ENCODE measurements at regions of chr2 and their contacts with region 1.

Region 1: GRCh38 chr2:28870146-28870891 is at the start of gene TRMT61B:
- DNase-seq: peak; percentile 97
- total RNA-seq, gene TRMT61B: 18.2 TPM

Region 2: DNA sequence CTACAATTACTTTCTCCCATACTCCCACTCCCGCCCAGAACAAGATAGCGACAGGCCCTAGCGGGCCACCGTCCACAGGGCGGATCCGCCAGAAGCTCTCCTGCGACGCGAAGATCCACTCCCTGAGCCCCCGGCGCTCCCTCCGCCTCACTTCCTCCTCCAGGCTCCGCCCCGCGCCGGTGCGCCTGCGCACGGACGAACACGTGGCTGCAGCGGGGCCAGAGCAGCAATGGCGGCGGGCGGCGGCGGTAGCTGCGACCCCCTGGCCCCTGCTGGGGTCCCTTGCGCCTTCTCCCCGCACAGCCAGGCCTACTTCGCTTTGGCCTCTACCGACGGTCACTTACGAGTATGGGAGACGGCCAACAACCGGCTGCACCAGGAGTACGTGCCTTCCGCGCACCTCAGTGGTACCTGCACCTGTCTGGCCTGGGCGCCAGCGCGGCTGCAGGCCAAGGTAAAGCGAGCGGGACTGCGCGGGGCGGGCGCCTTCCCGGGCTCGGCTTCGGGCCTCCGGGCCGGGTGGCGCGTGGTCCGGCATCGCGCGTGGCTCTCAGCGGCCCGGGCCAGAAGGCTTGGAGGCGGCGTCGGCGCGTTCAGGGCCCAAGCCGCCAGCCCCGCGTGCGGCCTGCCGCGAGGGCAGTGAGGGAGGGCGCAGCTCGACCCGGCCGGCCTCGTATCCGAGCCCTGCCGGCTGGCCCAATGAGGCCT is 24.3 kb after region 1 on chr2 and contains the start of gene WDR43:
- intact Hi-C with region 1: loop called (anchors 1 kb)
- DNase-seq: peak; percentile 99
- total RNA-seq, gene WDR43: 25.9 TPM

Measured in cardiac septum (tissue), 1 donor.